Activated CD4-positive, alpha-beta T cell treated with anti-CD3 and anti-CD28 coated beads, Interleukin-2, amount 10 ng/mL, durations not matched to agents 24 days and 14 days (primary cell): ENCODE measurements at regions of chr5 and their contacts with region 1.

Region 1: GRCh38 chr5:95554647-95555548 is at the starts of genes ARSK and SKIC3:
- DNase-seq: peak; percentile 97
- H3K4me3 Mint-ChIP-seq: peak within 1 kb of the TSS; percentile 96
- H3K27ac Mint-ChIP-seq: peak within 1 kb of the TSS; percentile 94
- H3K4me1 Mint-ChIP-seq: peaks cover 40% of the 10 kb centered on the region
- H3K27me3 Mint-ChIP-seq: no peaks in the 10 kb centered on the region
- total RNA-seq, gene ARSK: 3.2 and 4.1 TPM in 2 replicates
- total RNA-seq, gene SKIC3: 61.2 and 69.5 TPM in 2 replicates

Region 2: GRCh38 chr5:95422838-95423237 is 132.1 kb before region 1 on chr5:
- intact Hi-C with region 1: no loop called
- DNase-seq: no peak
- H3K4me3 Mint-ChIP-seq: no peak overlapping the region
- H3K27ac Mint-ChIP-seq: no peak overlapping the region
- H3K4me1 Mint-ChIP-seq: no peaks in the 10 kb centered on the region
- H3K27me3 Mint-ChIP-seq: peaks cover 6% of the 10 kb centered on the region

Region 3: DNA sequence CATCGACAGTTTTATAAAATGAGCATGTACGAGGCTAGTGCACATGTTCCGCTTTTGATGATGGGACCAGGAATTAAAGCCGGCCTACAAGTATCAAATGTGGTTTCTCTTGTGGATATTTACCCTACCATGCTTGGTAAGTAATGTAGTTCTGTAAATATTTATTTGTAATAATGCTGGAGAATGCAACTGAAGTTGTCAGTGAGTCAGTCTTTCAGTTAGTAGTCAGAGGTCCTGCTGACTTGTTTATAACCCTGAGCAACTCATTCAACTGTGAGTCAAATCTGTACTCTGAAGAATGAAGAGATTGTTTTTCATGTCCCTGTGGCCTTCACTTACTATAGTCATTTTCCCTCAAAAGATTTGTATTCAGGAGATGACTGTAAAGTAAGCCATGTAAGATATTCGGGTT is 36.6 kb after region 1 on chr5:
- intact Hi-C with region 1: loop called (anchors 1 kb)
- DNase-seq: no peak
- H3K4me3 Mint-ChIP-seq: no peak overlapping the region
- H3K27ac Mint-ChIP-seq: peak overlapping the region; percentile 39
- H3K4me1 Mint-ChIP-seq: peaks cover 20% of the 10 kb centered on the region
- H3K27me3 Mint-ChIP-seq: no peaks in the 10 kb centered on the region

Region 4: GRCh38 chr5:95620030-95620869 is 65.4 kb after region 1 on chr5 and contains the start of gene GPR150:
- intact Hi-C with region 1: loop called (anchors 1 kb)
- DNase-seq: peak; percentile 90
- H3K4me3 Mint-ChIP-seq: peak within 1 kb of the TSS; percentile 91
- H3K27ac Mint-ChIP-seq: peak within 1 kb of the TSS; percentile 67
- H3K4me1 Mint-ChIP-seq: peaks cover 35% of the 10 kb centered on the region
- H3K27me3 Mint-ChIP-seq: peaks cover 16% of the 10 kb centered on the region
- total RNA-seq, gene GPR150: 0.33 and 0.56 TPM in 2 replicates

Region 5: DNA sequence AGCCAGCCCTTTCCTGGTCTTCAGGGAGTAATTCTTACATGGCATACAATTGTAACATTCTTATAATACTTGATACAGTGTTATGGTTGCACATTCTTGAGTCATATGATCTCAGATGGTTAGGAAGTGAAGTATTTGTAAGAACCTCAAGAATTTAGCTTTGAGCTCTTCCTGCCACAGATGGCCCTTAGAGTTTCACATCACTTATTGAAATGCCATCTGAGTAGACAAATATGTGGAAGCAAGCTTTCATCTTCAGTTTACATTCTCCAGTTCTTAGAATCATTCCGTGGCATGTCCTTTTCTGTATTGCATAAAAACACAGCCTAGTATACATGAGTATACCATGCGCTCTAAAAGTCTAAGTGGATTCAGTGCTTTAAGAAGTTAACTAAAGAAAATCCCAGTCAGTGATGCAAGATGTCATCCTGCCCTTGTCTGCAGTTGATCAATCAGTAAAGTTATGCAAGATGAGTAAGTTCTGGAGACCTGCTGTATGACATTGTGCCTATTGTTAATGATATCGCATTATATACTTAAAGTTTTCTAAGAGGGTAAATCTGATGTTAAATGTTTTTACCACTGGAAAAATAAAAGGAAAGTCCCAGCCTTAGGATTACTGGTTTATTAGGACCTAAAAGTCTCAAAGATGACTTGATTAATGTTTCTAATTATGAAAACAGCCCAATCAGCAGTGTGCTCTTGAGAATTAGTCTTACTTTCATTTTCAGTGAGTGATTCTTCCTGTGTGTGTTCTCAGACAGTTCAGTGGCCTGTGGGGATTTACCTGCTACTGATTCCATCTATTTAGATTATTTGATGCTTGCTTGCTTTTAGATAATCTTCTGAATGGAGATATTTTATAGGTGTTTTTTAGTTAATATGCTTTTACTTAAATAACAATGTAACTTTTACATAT is 205.6 kb after region 1 on chr5:
- intact Hi-C with region 1: loop called (anchors 10 kb)
- DNase-seq: no peak
- H3K4me3 Mint-ChIP-seq: peak overlapping the region; percentile 68
- H3K27ac Mint-ChIP-seq: peak overlapping the region; percentile 77
- H3K4me1 Mint-ChIP-seq: peaks cover 23% of the 10 kb centered on the region
- H3K27me3 Mint-ChIP-seq: peaks cover 42% of the 10 kb centered on the region

Region 6: GRCh38 chr5:95809414-95809960 is 254.6 kb after region 1 on chr5:
- intact Hi-C with region 1: no loop called
- DNase-seq: peak; percentile 60
- H3K4me3 Mint-ChIP-seq: peak overlapping the region; percentile 72
- H3K27ac Mint-ChIP-seq: peak overlapping the region; percentile 78
- H3K4me1 Mint-ChIP-seq: peaks cover 54% of the 10 kb centered on the region
- H3K27me3 Mint-ChIP-seq: no peaks in the 10 kb centered on the region